ENCODE measurements at regions of chr20 and their contacts with region 1.

Region 1: DNA sequence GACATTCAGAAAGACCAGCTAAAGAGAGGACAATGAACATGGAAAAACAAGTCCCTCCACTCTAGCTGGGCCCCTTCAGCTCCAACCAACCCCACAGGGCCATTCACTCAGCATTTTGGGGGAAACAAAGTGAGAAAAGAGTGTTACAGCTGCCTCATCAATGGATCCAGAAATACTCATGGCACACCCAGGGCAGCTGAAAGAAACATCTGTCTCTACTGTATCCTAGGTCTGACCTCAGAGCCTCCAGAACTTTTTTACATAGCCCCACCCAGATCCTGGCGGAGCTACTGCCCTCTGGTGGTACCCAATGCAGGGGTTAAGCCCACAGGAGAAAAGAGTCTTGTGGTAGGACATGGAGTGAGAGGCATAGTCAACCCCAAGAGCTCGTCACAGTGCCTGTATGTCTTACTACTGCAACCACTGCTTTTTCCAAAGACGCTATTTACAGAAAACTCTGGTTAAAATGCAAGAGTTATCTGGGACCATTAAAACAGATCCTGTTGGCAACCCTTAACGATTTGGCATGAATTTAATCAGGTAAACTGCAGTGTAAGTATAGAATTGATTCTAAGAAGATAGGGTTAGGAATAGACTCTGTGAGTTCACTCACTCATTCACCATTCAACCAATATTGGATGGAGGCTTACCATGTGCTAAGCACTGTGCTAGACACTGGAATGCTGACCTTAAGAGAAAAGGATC is 37.4 kb upstream of the FAM83C start:
- DNase-seq: no peak
- H3K4me3 Mint-ChIP-seq: no peak overlapping the region
- H3K27ac Mint-ChIP-seq: no peak overlapping the region
- H3K4me1 Mint-ChIP-seq: peaks cover 32% of the 10 kb centered on the region
- H3K27me3 Mint-ChIP-seq: no peaks in the 10 kb centered on the region

Region 2: DNA sequence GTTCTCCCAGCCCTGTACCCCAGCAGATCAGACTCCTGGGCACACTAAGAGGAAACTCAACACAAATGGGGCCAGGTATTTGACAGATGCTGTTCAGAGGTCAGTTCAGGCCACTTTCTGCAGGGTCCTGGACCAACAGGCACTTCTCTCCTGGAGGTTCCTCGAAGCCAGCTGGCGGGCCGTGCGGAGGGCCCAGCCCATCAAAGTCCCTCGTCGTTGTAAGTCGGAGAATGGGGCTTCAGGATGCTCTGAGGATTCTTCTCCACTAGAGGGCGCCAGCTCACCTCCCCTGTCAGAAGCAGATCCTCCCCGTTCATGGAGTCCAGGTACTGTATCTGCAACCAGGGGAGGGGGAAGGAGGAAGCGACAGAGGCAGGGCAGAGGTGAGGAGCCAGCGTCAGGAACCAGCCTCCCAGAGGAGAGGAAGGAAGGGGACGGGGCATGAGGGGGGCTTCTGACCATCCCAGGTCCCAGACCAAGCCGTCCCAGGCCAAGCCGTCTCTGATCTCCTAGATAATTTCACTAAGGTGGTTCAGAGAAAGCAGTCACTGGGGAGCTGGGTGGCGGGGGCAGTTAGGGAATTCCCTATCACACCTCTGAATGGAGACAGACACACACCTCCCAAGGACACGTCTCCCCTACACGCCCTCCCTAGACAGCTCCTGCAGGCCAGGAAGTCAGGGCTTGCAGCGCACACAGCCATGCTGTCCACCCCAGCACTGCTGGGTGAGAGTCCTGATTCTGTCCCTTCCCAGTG is 25.7 kb before region 1 on chr20:
- intact Hi-C with region 1: loop called (anchors 1 kb)
- DNase-seq: peak; percentile 76
- H3K4me3 Mint-ChIP-seq: no peak overlapping the region
- H3K27ac Mint-ChIP-seq: peak overlapping the region; percentile 74
- H3K4me1 Mint-ChIP-seq: peaks cover 29% of the 10 kb centered on the region
- H3K27me3 Mint-ChIP-seq: no peaks in the 10 kb centered on the region

Region 3: GRCh38 chr20:35312348-35312747 is 17.2 kb before region 1 on chr20:
- intact Hi-C with region 1: loop called (anchors 2 kb)
- DNase-seq: no peak
- H3K4me3 Mint-ChIP-seq: no peak overlapping the region
- H3K27ac Mint-ChIP-seq: peak overlapping the region; percentile 4
- H3K4me1 Mint-ChIP-seq: peaks cover 37% of the 10 kb centered on the region
- H3K27me3 Mint-ChIP-seq: no peaks in the 10 kb centered on the region

Measured in activated T-helper 2 cell treated with anti-CD3 and anti-CD28 coated beads, Interferon-gamma antibody, Interleukin-2, Interleukin-4, amounts not matched to agents 10 μg/mL and 5 μg/mL and 100 μg/mL, durations not matched to agents 14 hours and 24 hours and 36 hours (primary cell).